ENCODE measurements at regions of chr1 and their contacts with region 1.

Region 1: GRCh38 chr1:160675641-160676410 is 29.0 kb upstream of the SLAMF1 start:
- DNase-seq: peak; percentile 75
- ATAC-seq: peak; percentile 76
- H3K4me3 Mint-ChIP-seq: no peak overlapping the region
- H3K27ac Mint-ChIP-seq: no peak overlapping the region; the same call in 1 of the 2 replicates
- H3K4me1 Mint-ChIP-seq: peaks cover 10% of the 10 kb centered on the region
- H3K27me3 Mint-ChIP-seq: no peaks in the 10 kb centered on the region; the same call in 1 of the 2 replicates
- CTCF ChIP-seq: no peak

Region 2: GRCh38 chr1:160597051-160597450 is 78.8 kb before region 1 on chr1:
- CTCF ChIA-PET with region 1: no interaction called
- POLR2A ChIA-PET with region 1: interaction called, 10 read pairs
- DNase-seq: no peak
- ATAC-seq: no peak
- H3K4me3 Mint-ChIP-seq: no peak overlapping the region
- H3K27ac Mint-ChIP-seq: no peak overlapping the region
- H3K4me1 Mint-ChIP-seq: peaks cover 6% of the 10 kb centered on the region
- H3K27me3 Mint-ChIP-seq: no peaks in the 10 kb centered on the region; the same call in none of the 2 replicates
- CTCF ChIP-seq: no peak

Region 3: DNA sequence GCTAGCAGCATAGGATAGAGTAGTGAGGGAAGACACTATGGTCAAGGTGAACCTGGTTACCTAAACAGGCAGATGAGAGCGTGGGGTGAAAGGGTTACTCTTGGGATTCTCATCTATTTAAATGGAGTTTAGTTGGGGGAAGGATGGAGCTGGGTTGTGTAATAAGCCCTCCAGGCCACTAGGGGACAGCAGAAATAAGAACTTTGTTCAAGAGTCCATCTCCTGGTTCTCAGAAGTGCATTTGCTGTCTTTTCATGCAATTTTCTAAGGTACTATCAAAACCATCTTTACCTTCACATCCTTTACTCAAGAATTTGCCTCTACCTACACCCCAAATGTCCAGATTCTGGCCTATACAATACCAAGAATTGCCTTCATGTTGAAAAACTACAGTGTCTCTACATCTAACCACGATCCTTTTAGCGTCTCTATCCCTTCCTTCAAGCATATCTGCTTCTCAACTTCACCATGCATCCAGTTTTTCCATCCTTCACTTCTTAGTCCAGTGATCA is 57.0 kb before region 1 on chr1:
- CTCF ChIA-PET with region 1: interaction called, 12 read pairs
- POLR2A ChIA-PET with region 1: no interaction called
- DNase-seq: no peak
- ATAC-seq: peak; percentile 41; the same call in 1 of the 2 replicates
- H3K4me3 Mint-ChIP-seq: no peak overlapping the region
- H3K27ac Mint-ChIP-seq: no peak overlapping the region
- H3K4me1 Mint-ChIP-seq: peaks cover 19% of the 10 kb centered on the region
- H3K27me3 Mint-ChIP-seq: no peaks in the 10 kb centered on the region
- CTCF ChIP-seq: peak; percentile 61

Region 4: GRCh38 chr1:160733898-160734297 is 58.1 kb after region 1 on chr1:
- CTCF ChIA-PET with region 1: no interaction called
- POLR2A ChIA-PET with region 1: no interaction called
- DNase-seq: no peak
- ATAC-seq: no peak
- H3K4me3 Mint-ChIP-seq: no peak overlapping the region
- H3K27ac Mint-ChIP-seq: no peak overlapping the region
- H3K4me1 Mint-ChIP-seq: no peaks in the 10 kb centered on the region
- H3K27me3 Mint-ChIP-seq: peaks cover 9% of the 10 kb centered on the region
- CTCF ChIP-seq: no peak

Region 5: DNA sequence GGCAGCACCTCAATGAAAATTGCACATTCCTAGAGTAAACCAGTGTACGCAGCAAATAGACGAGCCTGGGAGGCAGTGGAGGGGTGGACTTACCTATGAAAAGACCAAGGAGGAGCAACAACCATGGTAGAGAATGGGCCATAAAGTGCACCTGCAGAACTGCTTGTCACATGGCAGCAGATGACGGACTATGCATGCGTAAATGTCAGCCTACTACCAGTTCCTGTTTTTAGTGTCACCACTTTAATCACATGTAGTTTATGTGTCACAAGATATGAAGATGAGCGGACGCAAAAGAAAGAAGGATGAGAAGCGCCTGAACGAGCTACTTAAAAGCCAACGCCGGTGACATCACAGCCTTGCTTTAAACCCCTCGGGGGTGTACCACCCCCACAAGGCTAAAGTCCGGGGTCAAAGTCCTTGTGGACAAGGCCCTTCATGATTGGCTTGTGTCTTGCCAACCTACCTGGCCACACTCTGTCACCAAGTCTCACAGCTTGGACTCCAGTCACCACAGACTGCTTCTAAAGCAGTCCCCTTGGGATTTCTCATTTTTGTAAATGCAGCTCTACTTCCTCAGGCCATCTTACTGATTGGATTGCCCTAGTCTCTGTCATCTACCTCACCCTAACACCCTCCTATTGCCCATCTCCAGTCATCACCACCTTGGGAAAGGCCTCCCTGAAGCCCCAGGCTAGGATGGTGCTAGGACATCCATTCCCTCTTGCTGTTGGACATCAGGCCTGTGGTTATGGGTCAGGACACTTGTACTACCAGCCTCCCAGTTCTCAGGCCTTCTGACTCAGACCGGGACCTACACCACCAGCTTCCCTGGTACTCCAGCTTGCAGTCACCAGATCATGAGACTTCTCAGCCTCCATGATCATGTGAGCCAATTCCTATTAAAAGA is 114.1 kb after region 1 on chr1:
- CTCF ChIA-PET with region 1: no interaction called
- POLR2A ChIA-PET with region 1: no interaction called
- DNase-seq: no peak
- ATAC-seq: no peak
- H3K4me3 Mint-ChIP-seq: no peak overlapping the region
- H3K27ac Mint-ChIP-seq: no peak overlapping the region
- H3K4me1 Mint-ChIP-seq: no peaks in the 10 kb centered on the region
- H3K27me3 Mint-ChIP-seq: no peaks in the 10 kb centered on the region
- CTCF ChIP-seq: no peak